PC-3 (cell line): ENCODE measurements at regions of chr1 and their contacts with region 1.

Region 1: DNA sequence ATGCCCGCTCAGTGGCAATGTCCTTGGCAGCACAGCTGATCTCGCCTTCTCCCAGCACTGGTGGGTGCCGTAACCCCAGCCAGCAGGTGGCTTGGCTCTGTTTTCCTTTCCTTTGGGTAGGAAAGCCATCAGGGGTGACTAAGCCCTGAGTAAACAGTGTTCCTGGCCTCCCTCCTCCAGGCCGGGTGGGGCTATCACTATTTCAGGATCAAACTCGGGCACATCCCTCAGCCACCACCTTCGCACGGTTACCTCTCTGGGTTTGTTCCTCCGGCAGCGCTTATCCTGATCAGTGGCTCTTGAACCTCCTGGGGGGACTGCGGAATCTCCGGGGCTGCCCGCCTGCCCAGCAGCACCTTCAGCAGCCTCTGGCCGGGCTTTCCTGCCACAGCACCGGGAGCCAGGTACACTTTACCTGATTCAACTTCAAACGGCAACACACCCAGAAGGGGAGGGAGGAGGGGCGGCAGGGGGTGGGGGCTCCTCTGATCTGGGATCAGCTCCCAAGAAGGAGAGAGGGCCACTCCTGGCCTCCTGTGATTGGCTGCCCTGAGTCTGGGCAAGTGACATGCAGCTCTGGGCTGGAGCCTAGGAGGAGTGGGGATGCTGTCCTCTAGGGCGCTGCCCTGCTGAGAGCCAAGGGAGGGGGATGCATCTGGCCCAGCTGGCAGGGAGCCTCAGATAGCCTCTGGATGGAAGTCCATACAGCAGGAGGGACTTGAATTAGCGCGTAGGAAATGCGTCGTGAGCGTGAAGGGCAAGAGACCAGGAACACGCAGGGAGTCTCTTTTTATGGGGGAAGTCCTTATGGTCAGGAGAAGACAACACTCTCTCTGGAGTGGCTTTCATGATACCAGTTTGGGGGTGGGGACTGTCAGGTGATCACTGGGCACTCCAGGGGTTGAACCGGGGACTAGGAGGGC is at the start of gene ASCL5:
- DNase-seq: peak; percentile 100
- ATAC-seq: peak; percentile 90
- H3K4me3 ChIP-seq: peak within 1 kb of the TSS; percentile 59
- H3K27ac ChIP-seq: peak within 1 kb of the TSS; percentile 35
- H3K4me1 ChIP-seq: peaks cover 38% of the 10 kb centered on the region
- H3K27me3 ChIP-seq: no peaks in the 10 kb centered on the region
- CTCF ChIP-seq: peak; percentile 89
- total RNA-seq, gene ASCL5: 2.4 and 3.1 TPM in 2 replicates

Region 2: GRCh38 chr1:200925831-200926230 is 201.3 kb before region 1 on chr1:
- CTCF ChIA-PET with region 1: no interaction called
- POLR2A ChIA-PET with region 1: no interaction called
- intact Hi-C with region 1: no loop called
- DNase-seq: peak; percentile 84
- ATAC-seq: peak; percentile 89
- H3K4me3 ChIP-seq: no peak overlapping the region
- H3K27ac ChIP-seq: no peak overlapping the region
- H3K4me1 ChIP-seq: peaks cover 11% of the 10 kb centered on the region
- H3K27me3 ChIP-seq: no peaks in the 10 kb centered on the region
- CTCF ChIP-seq: no peak

Region 3: DNA sequence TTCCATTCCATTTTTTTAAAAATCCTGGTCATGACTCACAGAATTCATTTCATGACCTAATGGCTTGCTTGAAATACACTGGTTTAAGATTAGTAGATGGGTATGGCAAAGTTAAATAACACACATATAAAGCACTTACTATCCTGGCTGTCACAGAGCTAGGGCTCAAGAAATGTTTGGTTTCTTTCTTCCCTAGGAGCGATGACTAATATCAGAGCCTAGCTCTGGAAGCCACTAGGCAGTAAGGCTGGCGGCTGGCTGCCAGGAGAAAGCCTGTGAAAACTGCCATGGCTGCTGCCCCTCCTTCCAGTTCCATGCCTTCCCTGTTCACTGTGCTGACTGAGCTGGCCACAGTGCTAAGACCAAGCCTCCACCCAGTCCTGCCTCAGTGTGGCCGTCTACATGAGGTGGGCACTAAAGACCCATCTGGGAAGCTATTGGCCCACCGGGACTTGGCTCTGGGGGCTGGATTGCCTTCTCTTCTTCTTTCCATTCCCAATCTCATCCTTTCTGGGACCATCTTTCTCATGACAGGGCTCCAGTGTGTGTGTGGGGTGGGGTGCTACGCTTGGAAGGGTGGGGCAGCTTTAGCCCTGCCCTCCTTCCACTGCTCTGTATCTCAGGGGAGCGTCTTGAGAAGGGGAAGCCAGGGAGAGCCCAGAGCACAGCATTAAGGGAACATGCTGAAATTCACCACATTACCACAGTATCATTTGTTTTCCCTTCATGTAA is 10.7 kb after region 1 on chr1:
- CTCF ChIA-PET with region 1: no interaction called
- POLR2A ChIA-PET with region 1: no interaction called
- intact Hi-C with region 1: loop called (anchors 1 kb)
- DNase-seq: peak; percentile 96
- ATAC-seq: peak; percentile 96
- H3K4me3 ChIP-seq: no peak overlapping the region
- H3K27ac ChIP-seq: peak overlapping the region; percentile 43
- H3K4me1 ChIP-seq: peaks cover 14% of the 10 kb centered on the region
- H3K27me3 ChIP-seq: no peaks in the 10 kb centered on the region
- CTCF ChIP-seq: no peak

Region 4: GRCh38 chr1:201191653-201192260 is 64.7 kb after region 1 on chr1:
- CTCF ChIA-PET with region 1: no interaction called
- POLR2A ChIA-PET with region 1: no interaction called
- intact Hi-C with region 1: no loop called
- DNase-seq: peak; percentile 99
- ATAC-seq: peak; percentile 98
- H3K4me3 ChIP-seq: no peak overlapping the region
- H3K27ac ChIP-seq: peak overlapping the region; percentile 1; the same call in 1 of the 2 replicates
- H3K4me1 ChIP-seq: peaks cover 17% of the 10 kb centered on the region
- H3K27me3 ChIP-seq: no peaks in the 10 kb centered on the region
- CTCF ChIP-seq: no peak

Region 5: DNA sequence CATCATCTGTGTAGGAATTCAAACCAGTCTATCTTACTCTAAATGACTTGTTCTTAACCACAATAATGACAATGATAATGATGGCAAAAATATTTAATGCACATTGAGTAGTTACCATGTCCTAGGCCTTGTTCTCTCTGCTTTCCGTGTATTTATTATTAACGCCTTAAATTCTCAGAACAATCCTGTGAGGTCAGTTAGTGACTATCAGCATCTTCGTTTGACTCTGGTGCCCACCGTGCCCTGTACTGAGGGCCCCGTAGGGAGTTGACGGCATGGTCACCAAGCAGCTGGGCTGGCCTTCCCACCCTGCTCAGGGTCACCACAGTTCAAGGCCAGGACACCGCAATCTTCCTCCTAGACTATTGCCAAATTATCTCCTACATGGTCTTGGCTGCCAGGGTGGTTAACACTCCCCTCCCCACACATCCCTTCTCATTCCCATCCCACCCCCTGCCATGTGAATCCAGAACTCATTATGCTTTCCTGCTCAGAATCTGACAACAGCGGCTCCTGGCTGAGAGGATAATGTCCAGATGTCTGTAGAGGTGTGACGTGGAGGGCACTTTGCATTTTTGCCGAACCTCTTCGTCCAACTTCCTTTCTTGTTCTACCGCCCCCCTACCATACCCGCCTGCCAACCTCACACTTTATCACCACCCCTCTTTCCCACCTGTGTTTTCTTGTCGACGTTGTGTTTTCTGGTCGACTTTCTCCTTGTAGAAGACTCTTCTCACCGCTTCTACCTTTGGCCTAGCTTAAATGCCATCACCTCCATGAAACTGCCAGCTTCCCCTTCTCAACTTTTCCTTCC is 97.0 kb after region 1 on chr1:
- CTCF ChIA-PET with region 1: interaction called, 4 read pairs
- POLR2A ChIA-PET with region 1: no interaction called
- intact Hi-C with region 1: loop called (anchors 1 kb)
- DNase-seq: no peak
- ATAC-seq: no peak
- H3K4me3 ChIP-seq: no peak overlapping the region
- H3K27ac ChIP-seq: no peak overlapping the region
- H3K4me1 ChIP-seq: peaks cover 3% of the 10 kb centered on the region
- H3K27me3 ChIP-seq: no peaks in the 10 kb centered on the region
- CTCF ChIP-seq: no peak